Activated naive CD4-positive, alpha-beta T cell treated with anti-CD3 and anti-CD28 coated beads for 36 hours (primary cell): ENCODE measurements at regions of chr10 and their contacts with region 1.

Region 1: DNA sequence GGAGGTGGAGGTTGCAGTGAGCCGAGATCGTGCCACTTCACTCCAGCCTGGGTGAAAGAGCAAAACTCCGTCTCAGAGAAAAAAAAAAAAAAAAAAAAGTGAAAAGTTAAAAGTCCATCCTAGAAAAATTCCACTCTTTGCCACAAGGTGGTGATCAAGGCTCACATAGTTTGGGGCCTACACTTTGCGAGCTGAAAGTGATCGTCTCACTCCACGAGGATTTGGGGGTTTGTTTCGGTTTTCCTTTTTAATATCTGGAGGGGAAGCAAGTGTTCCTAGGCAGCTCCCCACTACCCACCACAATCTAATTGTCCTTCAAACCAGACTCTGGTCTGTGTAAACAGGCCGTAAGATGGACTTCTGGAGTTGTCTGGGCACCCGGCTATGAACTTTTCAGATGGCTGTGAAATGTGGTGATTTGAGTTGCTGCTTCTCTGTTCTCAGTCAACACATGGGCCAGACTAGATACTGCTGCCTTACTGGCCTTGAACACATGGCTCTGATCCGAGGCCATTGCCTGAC is 27.1 kb downstream of the PRLHR start:
- DNase-seq: peak; percentile 68
- H3K4me3 Mint-ChIP-seq: no peak overlapping the region
- H3K27ac Mint-ChIP-seq: no peak overlapping the region
- H3K4me1 Mint-ChIP-seq: peaks cover 7% of the 10 kb centered on the region
- H3K27me3 Mint-ChIP-seq: no peaks in the 10 kb centered on the region

Region 2: GRCh38 chr10:118584181-118584954 is 16.0 kb after region 1 on chr10:
- CTCF ChIA-PET with region 1: interaction called, 16 read pairs
- intact Hi-C with region 1: no loop called
- DNase-seq: no peak
- H3K4me3 Mint-ChIP-seq: no peak overlapping the region
- H3K27ac Mint-ChIP-seq: no peak overlapping the region
- H3K4me1 Mint-ChIP-seq: no peaks in the 10 kb centered on the region
- H3K27me3 Mint-ChIP-seq: no peaks in the 10 kb centered on the region

Region 3: GRCh38 chr10:118714366-118714765 is 146.0 kb after region 1 on chr10:
- CTCF ChIA-PET with region 1: interaction called, 66 read pairs
- intact Hi-C with region 1: no loop called
- DNase-seq: no peak
- H3K4me3 Mint-ChIP-seq: no peak overlapping the region
- H3K27ac Mint-ChIP-seq: no peak overlapping the region
- H3K4me1 Mint-ChIP-seq: peaks cover 8% of the 10 kb centered on the region
- H3K27me3 Mint-ChIP-seq: no peaks in the 10 kb centered on the region

Region 4: DNA sequence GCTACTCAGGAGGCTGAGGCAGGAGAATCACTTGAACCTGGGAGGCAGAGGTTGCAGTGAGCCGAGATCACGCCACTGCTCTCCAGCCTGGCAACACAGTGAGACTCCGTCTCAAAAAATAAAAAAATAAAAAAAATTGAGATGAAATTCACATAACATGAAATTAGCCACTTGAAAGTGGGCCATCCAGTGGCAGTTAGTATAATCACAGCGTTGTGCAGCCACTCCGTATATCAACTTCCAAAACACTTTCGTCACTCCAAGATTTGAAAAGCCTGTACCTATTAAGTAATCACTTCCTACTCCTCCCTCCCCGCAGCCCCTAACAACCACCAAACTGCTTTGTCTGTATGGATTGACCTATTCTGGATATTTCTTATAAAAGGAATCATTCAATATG is 207.1 kb after region 1 on chr10:
- CTCF ChIA-PET with region 1: no interaction called
- intact Hi-C with region 1: no loop called
- DNase-seq: no peak
- H3K4me3 Mint-ChIP-seq: no peak overlapping the region
- H3K27ac Mint-ChIP-seq: no peak overlapping the region
- H3K4me1 Mint-ChIP-seq: no peaks in the 10 kb centered on the region
- H3K27me3 Mint-ChIP-seq: no peaks in the 10 kb centered on the region

Region 5: DNA sequence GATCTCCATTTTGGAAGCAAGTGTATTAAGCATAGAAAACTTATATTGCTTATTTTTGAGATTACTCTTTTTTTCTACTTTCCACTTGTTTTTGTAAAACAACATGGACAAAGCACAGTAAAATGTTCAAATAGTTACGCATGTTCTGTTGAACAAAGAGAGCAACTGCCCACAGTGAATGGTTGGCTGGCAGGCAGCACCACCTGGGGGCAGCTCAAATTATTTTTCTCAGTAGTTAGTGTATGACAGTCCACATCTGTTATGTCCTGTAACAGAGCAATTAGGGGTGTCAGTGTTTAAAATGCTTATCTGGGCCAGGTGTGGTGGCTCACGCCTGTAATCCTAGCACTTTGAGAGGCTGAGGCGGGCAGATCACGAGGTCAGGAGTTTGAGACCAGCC is 232.5 kb after region 1 on chr10:
- CTCF ChIA-PET with region 1: interaction called, 5 read pairs
- intact Hi-C with region 1: loop called (anchors 1 kb)
- DNase-seq: peak; percentile 46
- H3K4me3 Mint-ChIP-seq: no peak overlapping the region
- H3K27ac Mint-ChIP-seq: no peak overlapping the region
- H3K4me1 Mint-ChIP-seq: peaks cover 3% of the 10 kb centered on the region
- H3K27me3 Mint-ChIP-seq: peaks cover 6% of the 10 kb centered on the region

Region 6: DNA sequence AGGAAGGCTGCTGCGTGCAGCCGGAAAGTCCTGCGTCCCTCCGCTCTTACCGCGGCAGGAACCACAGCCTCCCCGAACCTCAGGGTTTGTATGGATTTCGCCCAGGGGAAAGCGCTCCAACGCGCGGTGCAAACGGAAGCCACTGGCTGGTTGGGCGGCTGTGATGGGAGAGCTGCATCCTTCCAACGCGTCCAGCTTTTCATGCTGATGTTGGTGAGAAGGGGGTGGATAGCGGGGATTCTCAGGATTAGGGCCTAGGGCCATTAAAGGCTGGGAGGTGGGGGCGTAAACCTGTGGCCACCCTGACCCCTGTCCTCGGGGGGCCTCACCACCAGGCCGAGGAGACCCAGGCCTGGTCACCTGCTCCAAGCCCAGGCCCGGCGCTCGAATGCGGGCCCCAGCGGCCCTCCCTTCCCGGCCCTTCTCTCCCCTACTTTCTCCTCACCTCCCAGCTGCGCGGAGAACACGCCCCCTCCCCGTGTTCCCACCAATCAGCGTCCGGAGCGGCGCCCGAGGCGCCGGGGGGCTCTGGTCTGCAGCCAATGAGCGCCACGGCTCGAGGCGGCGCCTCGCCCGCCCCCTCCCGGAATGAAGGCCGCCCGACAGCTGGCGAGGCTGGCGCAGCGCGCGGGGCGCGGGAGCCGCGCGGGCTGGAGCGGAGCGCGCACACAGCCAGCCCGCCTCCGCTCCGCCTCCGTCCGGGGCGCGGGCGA is 460.7 kb after region 1 on chr10:
- CTCF ChIA-PET with region 1: interaction called, 5 read pairs
- intact Hi-C with region 1: loop called (anchors 5 kb)
- DNase-seq: peak; percentile 73
- H3K4me3 Mint-ChIP-seq: peak overlapping the region; percentile 66
- H3K27ac Mint-ChIP-seq: no peak overlapping the region
- H3K4me1 Mint-ChIP-seq: peaks cover 16% of the 10 kb centered on the region
- H3K27me3 Mint-ChIP-seq: peaks cover 4% of the 10 kb centered on the region